ENCODE measurements at regions of chr3 and their contacts with region 1.

Region 1: DNA sequence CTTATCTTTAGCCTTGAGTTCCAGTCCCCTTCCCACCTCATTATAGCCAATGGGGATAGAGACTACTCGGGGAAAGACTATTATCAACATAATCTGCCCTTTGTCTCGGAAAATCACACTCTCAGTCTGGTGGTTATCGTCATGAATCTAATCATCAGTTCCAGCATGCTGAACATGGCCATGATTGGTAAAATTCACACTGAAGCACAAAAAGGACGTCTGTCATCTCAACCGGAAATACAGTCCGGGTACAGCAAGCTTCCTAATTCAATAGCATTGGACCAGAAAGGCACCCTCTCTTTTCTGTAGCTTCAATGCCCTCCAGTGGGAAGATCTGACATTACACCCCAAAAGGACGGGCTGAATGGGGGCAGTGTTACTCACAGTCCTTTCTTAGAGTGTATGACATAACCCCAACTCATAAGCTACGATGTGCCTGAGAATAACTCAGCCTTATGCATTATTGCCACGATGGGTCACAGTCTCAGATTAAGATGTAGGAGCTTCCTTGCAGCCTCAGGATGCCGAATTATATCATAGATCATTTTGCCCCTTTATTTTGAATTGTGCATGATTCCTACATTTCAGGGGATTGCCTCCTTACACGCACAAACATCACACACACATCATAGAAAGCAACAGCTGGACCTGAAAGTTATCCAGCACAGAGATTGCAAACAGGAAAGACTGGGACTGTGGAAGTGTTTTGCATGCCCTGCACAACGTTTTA is 390.4 kb upstream of the LMCD1 start:
- DNase-seq: peak; percentile 30 to 44 (median 44)
- ATAC-seq: peak; percentile 95 to 96
- H3K4me3 ChIP-seq: peak overlapping the region; percentile 37
- H3K27ac ChIP-seq: no peak overlapping the region
- H3K4me1 ChIP-seq: no peaks in the 10 kb centered on the region
- H3K27me3 ChIP-seq: no peaks in the 10 kb centered on the region

Region 2: DNA sequence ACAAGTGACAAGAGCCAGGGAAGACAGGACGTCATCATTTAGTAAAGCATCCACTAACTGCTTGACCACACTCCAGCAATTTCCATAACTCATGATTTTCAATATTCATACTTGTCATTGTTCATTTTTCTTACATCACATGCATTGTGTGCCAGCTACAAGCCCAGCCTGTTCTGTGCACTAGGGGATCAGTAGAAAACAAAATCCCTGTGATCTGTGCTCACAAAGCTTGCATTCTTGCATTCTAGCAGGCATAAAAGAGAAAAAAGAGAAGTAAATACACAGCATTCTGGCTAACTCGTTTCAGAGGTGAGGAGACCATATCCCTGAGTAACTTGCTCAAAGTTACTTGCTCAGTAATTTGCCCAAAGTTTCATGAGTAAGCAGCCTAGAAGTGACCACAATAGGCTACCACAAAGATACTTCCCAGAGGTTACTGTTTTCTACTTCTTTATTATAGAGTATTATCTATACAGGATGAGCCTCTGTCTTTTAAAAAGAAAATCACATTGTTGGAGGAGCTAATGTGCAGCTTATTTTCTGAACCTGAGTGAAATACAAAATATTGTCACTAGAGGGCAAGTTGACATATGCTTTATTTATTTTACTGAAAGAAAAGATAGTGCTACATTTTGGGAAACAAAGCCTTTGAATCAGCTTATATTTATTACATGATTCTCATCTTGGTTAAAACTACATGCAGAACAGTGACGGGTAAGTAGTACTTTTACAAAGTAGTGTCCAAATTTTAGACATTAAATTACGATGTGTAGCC is 311.0 kb before region 1 on chr3:
- intact Hi-C with region 1: loop called in 2 of 4 experiments (anchors 2 to 10 kb)
- DNase-seq: no peak
- ATAC-seq: no peak
- H3K4me3 ChIP-seq: no peak overlapping the region
- H3K27ac ChIP-seq: no peak overlapping the region
- H3K4me1 ChIP-seq: no peaks in the 10 kb centered on the region
- H3K27me3 ChIP-seq: no peaks in the 10 kb centered on the region

Region 3: GRCh38 chr3:8223766-8224165 is 112.5 kb after region 1 on chr3:
- intact Hi-C with region 1: no loop called
- DNase-seq: peak; percentile 28 to 76 (median 53)
- ATAC-seq: peak in 1 of 2 donors; percentile 71
- H3K4me3 ChIP-seq: no peak overlapping the region
- H3K27ac ChIP-seq: no peak overlapping the region
- H3K4me1 ChIP-seq: no peaks in the 10 kb centered on the region
- H3K27me3 ChIP-seq: no peaks in the 10 kb centered on the region

Region 4: GRCh38 chr3:8341821-8342247 is 230.6 kb after region 1 on chr3:
- intact Hi-C with region 1: no loop called
- DNase-seq: peak in 2 of 3 donors; percentile 49
- ATAC-seq: no peak
- H3K4me3 ChIP-seq: no peak overlapping the region
- H3K27ac ChIP-seq: no peak overlapping the region
- H3K4me1 ChIP-seq: peaks cover 2% of the 10 kb centered on the region
- H3K27me3 ChIP-seq: no peaks in the 10 kb centered on the region

Measured in right cardiac atrium (tissue), 5 donors.